ENCODE measurements at regions of chr20 and their contacts with region 1.

Region 1: DNA sequence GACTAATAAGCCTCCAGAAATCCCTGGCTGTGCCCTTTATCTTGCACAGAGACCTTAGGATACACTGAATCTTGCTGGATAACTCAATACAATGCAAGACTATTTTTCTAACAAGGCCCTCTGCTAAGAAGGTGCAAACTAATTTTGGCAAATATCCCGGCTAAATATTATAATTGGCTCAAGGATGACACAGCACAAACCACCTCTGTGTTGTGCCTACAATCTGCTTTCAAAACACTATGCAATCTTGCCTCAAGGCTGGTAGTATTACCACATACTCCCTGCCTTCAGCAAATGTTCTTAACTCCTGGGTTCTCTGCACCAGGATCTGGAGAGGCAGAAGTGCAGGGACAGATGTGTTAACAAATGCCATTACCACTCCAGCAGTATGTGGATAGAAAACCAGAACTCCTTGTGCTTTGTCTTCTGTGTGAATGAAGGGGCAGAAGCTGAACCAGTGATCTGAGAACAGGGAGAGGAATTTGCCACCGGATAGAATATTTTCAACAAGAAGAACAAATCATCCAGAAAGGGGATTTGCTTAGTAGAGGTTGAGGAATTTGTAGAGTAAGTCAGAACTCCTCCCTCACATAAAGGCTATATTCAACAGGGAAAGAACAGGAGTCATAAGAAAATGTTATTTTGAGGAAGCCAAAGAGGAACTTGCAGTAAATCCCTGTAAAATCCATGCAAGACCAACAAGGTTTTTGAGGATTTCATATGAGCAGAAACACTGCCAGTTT is 74.1 kb upstream of the SLC4A11 start:
- DNase-seq: no peak
- H3K4me3 ChIP-seq: no peak overlapping the region
- H3K27ac ChIP-seq: peak overlapping the region in 1 of 2 experiments; percentile 25; a peak in 2 of 4 replicates
- H3K4me1 ChIP-seq: peaks cover 3 to 9% of the 10 kb centered on the region in 2 experiments; a peak in 2 of 4 replicates
- H3K27me3 ChIP-seq: no peaks in the 10 kb centered on the region
- CTCF ChIP-seq: no peak
- EP300 ChIP-seq: no peak
- RAD21 ChIP-seq: no peak

Region 2: GRCh38 chr20:3051385-3052019 is 261.6 kb before region 1 on chr20:
- CTCF ChIA-PET with region 1: interaction called, 10 read pairs
- POLR2A ChIA-PET with region 1: no interaction called
- DNase-seq: no peak
- H3K4me3 ChIP-seq: no peak overlapping the region
- H3K27ac ChIP-seq: no peak overlapping the region
- H3K4me1 ChIP-seq: peaks cover 0 to 10% of the 10 kb centered on the region in 2 experiments; a peak in 1 of 4 replicates
- H3K27me3 ChIP-seq: no peaks in the 10 kb centered on the region
- CTCF ChIP-seq: no peak
- EP300 ChIP-seq: no peak
- RAD21 ChIP-seq: no peak

Region 3: GRCh38 chr20:3276680-3277015 is 36.5 kb before region 1 on chr20:
- CTCF ChIA-PET with region 1: interaction called, 14 read pairs
- POLR2A ChIA-PET with region 1: no interaction called
- DNase-seq: no peak
- H3K4me3 ChIP-seq: no peak overlapping the region
- H3K27ac ChIP-seq: no peak overlapping the region
- H3K4me1 ChIP-seq: peaks cover 0 to 3% of the 10 kb centered on the region in 2 experiments; a peak in 1 of 4 replicates
- H3K27me3 ChIP-seq: no peaks in the 10 kb centered on the region
- CTCF ChIP-seq: peak; percentile 28
- EP300 ChIP-seq: no peak
- RAD21 ChIP-seq: peak; percentile 44

Region 4: DNA sequence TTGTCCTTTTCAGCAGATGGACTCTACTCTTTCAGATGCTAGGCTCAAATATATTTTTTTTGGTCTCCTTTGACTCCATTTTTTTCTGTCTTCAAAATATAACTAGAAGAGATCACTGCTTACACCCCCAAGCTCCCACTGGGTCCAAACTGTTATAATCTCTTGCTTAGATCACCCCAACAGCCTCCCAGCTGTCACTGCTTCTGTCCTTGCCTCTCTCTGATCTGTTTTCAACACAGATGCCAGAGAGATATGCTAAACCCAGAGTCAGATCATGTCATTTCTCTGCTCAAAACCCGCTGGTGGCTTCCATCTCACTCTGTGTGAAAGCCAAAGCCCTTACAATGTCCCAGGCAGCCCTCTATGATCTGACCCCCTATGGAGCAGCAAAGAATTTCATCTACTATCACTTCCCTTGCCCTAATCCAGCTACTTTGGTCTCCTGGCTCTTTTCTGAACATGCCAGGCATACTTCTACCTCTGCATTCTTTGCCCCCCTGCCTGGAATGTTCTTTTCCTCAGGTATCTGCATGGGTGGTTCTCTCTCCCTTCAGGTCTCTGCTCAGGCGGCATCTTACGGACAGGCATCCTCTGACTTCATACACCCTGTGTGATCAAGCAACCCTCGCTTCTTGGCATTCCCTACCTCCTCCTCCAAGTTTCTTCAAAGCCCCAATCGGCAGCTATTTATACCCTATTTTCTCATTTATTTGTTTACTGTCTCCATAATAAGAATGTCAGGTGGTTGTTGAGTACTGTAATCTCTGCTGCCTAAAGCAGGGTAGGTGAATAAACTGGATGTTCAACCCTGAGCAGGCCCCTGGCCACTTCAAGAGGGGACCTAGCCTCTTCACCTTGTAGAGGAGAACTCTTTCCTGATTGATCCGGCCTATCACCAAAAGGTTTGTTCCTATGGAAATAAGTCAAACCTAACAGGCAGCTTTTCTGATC is 30.6 kb before region 1 on chr20:
- CTCF ChIA-PET with region 1: interaction called, 12 read pairs
- POLR2A ChIA-PET with region 1: no interaction called
- DNase-seq: peak; percentile 46
- H3K4me3 ChIP-seq: no peak overlapping the region
- H3K27ac ChIP-seq: peak overlapping the region in 1 of 2 experiments; percentile 94; a peak in 2 of 4 replicates
- H3K4me1 ChIP-seq: peaks cover 0 to 26% of the 10 kb centered on the region in 2 experiments; a peak in 2 of 4 replicates
- H3K27me3 ChIP-seq: no peaks in the 10 kb centered on the region
- CTCF ChIP-seq: no peak
- EP300 ChIP-seq: peak in 1 of 2 experiments; percentile 68; a peak in 1 of 4 replicates
- RAD21 ChIP-seq: peak; percentile 25; the same call in 1 of the 2 replicates

Region 5: DNA sequence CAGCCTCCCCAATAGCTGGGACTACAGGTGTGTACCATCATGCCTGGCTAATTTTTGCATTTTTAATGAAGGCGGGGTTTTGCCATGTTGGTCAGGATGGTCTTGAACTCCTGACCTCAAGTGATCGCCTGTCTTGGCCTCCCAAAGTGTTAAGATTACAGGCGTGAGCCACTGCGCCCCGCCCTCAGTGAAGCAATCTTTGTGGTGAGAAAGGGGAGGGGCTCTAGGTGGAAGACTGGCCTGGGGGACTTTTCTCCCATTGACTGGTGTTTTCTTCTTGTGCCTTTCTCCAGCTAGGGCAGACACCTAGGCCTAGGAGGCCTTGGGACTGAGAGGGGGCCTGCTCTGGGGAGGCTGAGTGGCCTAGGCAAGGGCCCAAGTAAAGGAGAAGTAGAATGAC is 10.3 kb after region 1 on chr20:
- CTCF ChIA-PET with region 1: interaction called, 11 read pairs
- POLR2A ChIA-PET with region 1: no interaction called
- DNase-seq: no peak
- H3K4me3 ChIP-seq: no peak overlapping the region
- H3K27ac ChIP-seq: no peak overlapping the region
- H3K4me1 ChIP-seq: no peaks in the 10 kb centered on the region
- H3K27me3 ChIP-seq: no peaks in the 10 kb centered on the region
- CTCF ChIP-seq: no peak
- EP300 ChIP-seq: no peak
- RAD21 ChIP-seq: no peak

Region 6: GRCh38 chr20:3330046-3330741 is 17.1 kb after region 1 on chr20:
- CTCF ChIA-PET with region 1: interaction called, 11 read pairs
- POLR2A ChIA-PET with region 1: no interaction called
- DNase-seq: no peak
- H3K4me3 ChIP-seq: no peak overlapping the region
- H3K27ac ChIP-seq: no peak overlapping the region
- H3K4me1 ChIP-seq: no peaks in the 10 kb centered on the region
- H3K27me3 ChIP-seq: no peaks in the 10 kb centered on the region
- CTCF ChIP-seq: peak; percentile 12; the same call in 1 of the 2 replicates
- EP300 ChIP-seq: no peak
- RAD21 ChIP-seq: no peak